ENCODE measurements at regions of chr7 and their contacts with region 1.

Region 1: GRCh38 chr7:44082541-44083207 is 344 bp upstream of the POLM start:
- DNase-seq: peak; percentile 99
- H3K4me3 Mint-ChIP-seq: peak overlapping the region; percentile 87
- H3K27ac Mint-ChIP-seq: peak overlapping the region; percentile 85
- H3K4me1 Mint-ChIP-seq: peaks cover 7% of the 10 kb centered on the region
- H3K27me3 Mint-ChIP-seq: no peaks in the 10 kb centered on the region
- CTCF ChIP-seq: no peak

Region 2: GRCh38 chr7:44072364-44073231 is 10.1 kb before region 1 on chr7:
- CTCF ChIA-PET with region 1: interaction called, 3 read pairs
- POLR2A ChIA-PET with region 1: interaction called, 12 read pairs
- intact Hi-C with region 1: no loop called
- DNase-seq: peak; percentile 96
- H3K4me3 Mint-ChIP-seq: peak overlapping the region; percentile 54
- H3K27ac Mint-ChIP-seq: peak overlapping the region; percentile 42
- H3K4me1 Mint-ChIP-seq: peaks cover 35% of the 10 kb centered on the region
- H3K27me3 Mint-ChIP-seq: no peaks in the 10 kb centered on the region
- CTCF ChIP-seq: peak; percentile 80